ENCODE measurements at regions of chr2 and their contacts with region 1.

Region 1: GRCh38 chr2:100272841-100273329 is 49.4 kb downstream of the LONRF2 start:
- DNase-seq: peak; percentile 75 to 83 (median 79)
- H3K4me3 ChIP-seq: no peak overlapping the region
- H3K27ac ChIP-seq: peak overlapping the region in 1 of 2 donors; percentile 72
- H3K4me1 ChIP-seq: peaks cover 3% of the 10 kb centered on the region
- H3K27me3 ChIP-seq: no peaks in the 10 kb centered on the region
- CTCF ChIP-seq: no peak
- EP300 ChIP-seq: no peak
- POLR2A ChIP-seq: no peak

Region 2: DNA sequence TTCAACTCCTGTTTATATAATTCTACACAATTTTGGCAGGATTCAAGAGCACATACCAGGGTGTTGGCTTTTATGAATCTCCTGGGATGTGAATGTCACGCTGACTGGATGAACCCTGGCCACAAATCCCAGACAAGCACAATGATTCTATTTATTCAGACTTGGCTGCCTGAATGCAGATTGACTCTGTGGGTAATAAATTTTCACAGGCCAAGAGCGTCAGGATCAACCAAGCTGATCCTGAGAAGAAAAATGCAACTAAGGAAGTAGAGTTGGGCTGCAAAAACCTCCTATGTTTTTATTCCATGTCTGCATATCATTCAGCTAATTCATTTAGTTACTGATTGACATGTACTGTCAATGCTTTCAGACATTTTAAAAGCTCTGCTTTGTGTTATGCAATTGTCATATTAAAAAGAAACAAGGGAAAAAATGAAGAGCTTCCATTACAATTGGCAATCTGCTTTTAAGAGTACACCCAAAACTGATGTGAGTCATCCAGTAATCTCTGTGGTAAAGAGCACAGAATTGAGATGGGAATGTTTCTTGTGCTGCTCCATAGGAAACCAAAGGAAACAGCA is 610.0 kb before region 1 on chr2:
- intact Hi-C with region 1: no loop called
- DNase-seq: no peak
- H3K4me3 ChIP-seq: no peak overlapping the region
- H3K27ac ChIP-seq: no peak overlapping the region
- H3K4me1 ChIP-seq: peaks cover 13% of the 10 kb centered on the region
- H3K27me3 ChIP-seq: no peaks in the 10 kb centered on the region
- CTCF ChIP-seq: no peak
- EP300 ChIP-seq: no peak
- POLR2A ChIP-seq: no peak

Region 3: GRCh38 chr2:100321181-100321865 is 48.4 kb after region 1 on chr2:
- intact Hi-C with region 1: loop called in 2 of 4 experiments (anchors 5 kb)
- DNase-seq: peak; percentile 38 to 71 (median 57)
- H3K4me3 ChIP-seq: peak overlapping the region; percentile 72
- H3K27ac ChIP-seq: peak overlapping the region; percentile 88 to 90
- H3K4me1 ChIP-seq: peaks cover 4% of the 10 kb centered on the region
- H3K27me3 ChIP-seq: no peaks in the 10 kb centered on the region
- CTCF ChIP-seq: peak in 2 of 3 donors; percentile 17 to 18
- EP300 ChIP-seq: no peak
- POLR2A ChIP-seq: peak; percentile 8

Region 4: DNA sequence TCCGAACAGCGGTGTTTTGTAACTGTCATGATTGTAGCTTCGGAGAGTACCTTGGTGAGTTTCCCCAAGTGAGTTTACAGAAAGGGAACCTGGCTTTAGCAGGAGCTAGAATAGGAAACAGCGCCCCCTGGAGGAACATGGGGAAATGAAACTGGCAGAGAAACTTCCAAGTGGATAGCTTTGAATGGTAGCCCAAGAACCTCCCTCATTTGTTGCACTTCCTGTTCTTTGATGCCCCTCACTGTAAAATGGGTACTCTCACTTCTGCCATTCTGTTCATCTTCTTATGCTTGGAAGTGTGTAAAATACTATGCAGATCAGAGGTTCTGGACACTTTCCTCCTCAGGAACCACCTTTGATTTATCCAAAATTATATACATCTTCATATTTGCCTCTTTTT is 108.4 kb after region 1 on chr2:
- intact Hi-C with region 1: loop called in 1 of 4 experiments (anchors 5 kb)
- DNase-seq: peak; percentile 80 to 90 (median 85)
- H3K4me3 ChIP-seq: no peak overlapping the region
- H3K27ac ChIP-seq: no peak overlapping the region
- H3K4me1 ChIP-seq: no peaks in the 10 kb centered on the region
- H3K27me3 ChIP-seq: no peaks in the 10 kb centered on the region
- CTCF ChIP-seq: peak; percentile 75 to 96 (median 82)
- EP300 ChIP-seq: no peak
- POLR2A ChIP-seq: peak; percentile 14

Measured in ovary (tissue), 10 donors.